ENCODE measurements at regions of chr5 and their contacts with region 1.

Region 1: DNA sequence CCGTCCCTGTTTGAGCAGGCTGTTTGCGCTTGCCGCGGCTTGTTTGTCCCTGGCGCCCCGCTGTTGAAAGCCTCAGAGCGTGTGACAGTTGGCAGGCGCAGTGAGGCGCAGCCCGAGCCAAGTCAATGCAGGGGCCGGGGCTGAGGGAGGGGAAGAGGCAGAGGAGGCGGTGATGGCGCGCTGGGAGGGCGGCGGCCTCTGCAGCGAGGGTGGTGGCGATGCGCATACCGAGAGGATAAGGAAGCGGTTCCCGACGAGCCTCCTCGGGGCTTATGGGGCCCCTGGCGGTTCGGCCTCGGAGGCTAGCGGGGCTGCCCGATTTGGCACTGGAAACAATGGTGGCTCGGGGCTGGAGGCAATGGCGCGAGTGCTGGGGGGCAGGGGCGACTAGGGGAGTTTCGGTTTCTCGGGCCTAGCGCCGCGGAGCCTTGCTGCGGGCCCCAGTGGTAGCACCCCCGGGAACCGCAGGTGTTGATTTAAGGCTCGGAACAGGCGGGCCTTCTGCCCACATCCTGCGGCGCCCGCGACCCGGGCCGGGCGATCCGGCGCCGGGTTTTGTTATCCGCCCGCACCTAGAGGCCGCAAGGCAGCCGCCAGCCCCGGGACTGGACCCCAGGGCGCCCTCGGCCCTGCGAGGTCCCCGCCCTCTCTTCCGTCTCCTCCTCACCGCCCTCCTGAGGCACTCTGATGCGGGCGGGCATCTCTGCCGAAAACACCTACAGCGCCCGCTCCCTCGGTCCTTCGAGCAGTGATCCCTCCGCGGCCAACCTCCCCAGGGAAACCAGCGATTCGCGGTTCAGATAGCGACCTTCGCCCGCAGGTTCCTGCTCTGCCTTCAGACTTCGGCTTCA is 947 bp upstream of the LNPEP start:
- DNase-seq: peak; percentile 98
- ATAC-seq: peak; percentile 68
- H3K4me3 ChIP-seq: peak overlapping the region; percentile 65 to 99 (median 90)
- H3K4me3 Mint-ChIP-seq: peak overlapping the region; percentile 95
- H3K27ac ChIP-seq: peak overlapping the region; percentile 88 to 93
- H3K27ac Mint-ChIP-seq: peak overlapping the region; percentile 99
- H3K4me1 ChIP-seq: peaks cover 49 to 58% of the 10 kb centered on the region in 2 donors
- H3K4me1 Mint-ChIP-seq: peaks cover 62% of the 10 kb centered on the region
- H3K27me3 ChIP-seq: no peaks in the 10 kb centered on the region
- H3K27me3 Mint-ChIP-seq: no peaks in the 10 kb centered on the region
- CTCF ChIP-seq: peak; percentile 13

Region 2: GRCh38 chr5:95808686-95809413 is 1126.1 kb before region 1 on chr5:
- CTCF ChIA-PET with region 1: no interaction called
- POLR2A ChIA-PET with region 1: no interaction called
- intact Hi-C with region 1: loop called (anchors 5 kb)
- DNase-seq: peak; percentile 95
- ATAC-seq: peak; percentile 100
- H3K4me3 ChIP-seq: peak overlapping the region in 3 of 5 experiments; percentile 27 to 39 (median 33)
- H3K4me3 Mint-ChIP-seq: peak overlapping the region; percentile 86
- H3K27ac ChIP-seq: peak overlapping the region; percentile 81 to 97
- H3K27ac Mint-ChIP-seq: peak overlapping the region; percentile 97
- H3K4me1 ChIP-seq: peaks cover 34 to 37% of the 10 kb centered on the region in 2 donors
- H3K4me1 Mint-ChIP-seq: peaks cover 58% of the 10 kb centered on the region
- H3K27me3 ChIP-seq: no peaks in the 10 kb centered on the region
- H3K27me3 Mint-ChIP-seq: no peaks in the 10 kb centered on the region
- CTCF ChIP-seq: no peak

Region 3: DNA sequence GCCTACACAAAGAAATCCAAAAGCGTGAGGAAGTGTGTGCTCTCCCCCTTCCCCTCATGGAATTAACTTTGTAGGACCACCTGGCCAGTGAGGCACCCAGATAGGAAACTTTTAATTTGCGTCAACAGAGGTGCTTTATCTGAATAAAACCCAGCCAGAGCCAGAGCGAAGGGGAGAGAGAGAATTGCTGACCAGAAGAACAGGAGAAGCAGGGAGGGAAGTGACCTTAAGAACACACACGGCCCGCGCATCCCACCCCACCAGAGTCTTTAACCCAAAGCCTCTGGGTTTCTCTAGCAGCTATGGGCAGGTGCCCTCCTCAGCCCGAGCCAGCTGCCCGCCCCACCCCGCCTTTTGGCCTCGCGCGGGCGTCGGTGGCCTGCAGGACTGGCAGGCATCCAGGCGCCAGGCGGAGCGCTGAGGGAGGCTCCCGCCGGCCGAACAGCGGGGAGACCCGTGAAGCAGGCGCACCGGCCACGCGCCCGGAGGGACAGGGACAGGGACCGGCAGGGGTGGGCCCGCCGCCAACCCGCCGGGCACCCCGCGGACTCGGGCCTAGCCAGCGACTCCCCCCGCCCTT is 127.8 kb before region 1 on chr5:
- CTCF ChIA-PET with region 1: no interaction called
- POLR2A ChIA-PET with region 1: interaction called, 18 read pairs
- intact Hi-C with region 1: loop called (anchors 1 kb)
- DNase-seq: no peak
- ATAC-seq: peak; percentile 19
- H3K4me3 ChIP-seq: peak overlapping the region; percentile 47 to 86 (median 73)
- H3K4me3 Mint-ChIP-seq: peak overlapping the region; percentile 90
- H3K27ac ChIP-seq: peak overlapping the region; percentile 86 to 90
- H3K27ac Mint-ChIP-seq: peak overlapping the region; percentile 99
- H3K4me1 ChIP-seq: peaks cover 25 to 32% of the 10 kb centered on the region in 2 donors
- H3K4me1 Mint-ChIP-seq: peaks cover 49% of the 10 kb centered on the region
- H3K27me3 ChIP-seq: no peaks in the 10 kb centered on the region
- H3K27me3 Mint-ChIP-seq: no peaks in the 10 kb centered on the region
- CTCF ChIP-seq: no peak

Region 4: GRCh38 chr5:96885518-96886338 is 49.2 kb before region 1 on chr5:
- CTCF ChIA-PET with region 1: interaction called, 3 read pairs
- POLR2A ChIA-PET with region 1: no interaction called
- intact Hi-C with region 1: loop called (anchors 1 kb)
- DNase-seq: peak; percentile 86
- ATAC-seq: peak; percentile 79
- H3K4me3 ChIP-seq: peak overlapping the region in 2 of 5 experiments; percentile 5 to 27
- H3K4me3 Mint-ChIP-seq: peak overlapping the region; percentile 75
- H3K27ac ChIP-seq: peak overlapping the region; percentile 76 to 91
- H3K27ac Mint-ChIP-seq: peak overlapping the region; percentile 92
- H3K4me1 ChIP-seq: peaks cover 51 to 57% of the 10 kb centered on the region in 2 donors
- H3K4me1 Mint-ChIP-seq: peaks cover 56% of the 10 kb centered on the region
- H3K27me3 ChIP-seq: no peaks in the 10 kb centered on the region
- H3K27me3 Mint-ChIP-seq: no peaks in the 10 kb centered on the region
- CTCF ChIP-seq: no peak

Region 5: DNA sequence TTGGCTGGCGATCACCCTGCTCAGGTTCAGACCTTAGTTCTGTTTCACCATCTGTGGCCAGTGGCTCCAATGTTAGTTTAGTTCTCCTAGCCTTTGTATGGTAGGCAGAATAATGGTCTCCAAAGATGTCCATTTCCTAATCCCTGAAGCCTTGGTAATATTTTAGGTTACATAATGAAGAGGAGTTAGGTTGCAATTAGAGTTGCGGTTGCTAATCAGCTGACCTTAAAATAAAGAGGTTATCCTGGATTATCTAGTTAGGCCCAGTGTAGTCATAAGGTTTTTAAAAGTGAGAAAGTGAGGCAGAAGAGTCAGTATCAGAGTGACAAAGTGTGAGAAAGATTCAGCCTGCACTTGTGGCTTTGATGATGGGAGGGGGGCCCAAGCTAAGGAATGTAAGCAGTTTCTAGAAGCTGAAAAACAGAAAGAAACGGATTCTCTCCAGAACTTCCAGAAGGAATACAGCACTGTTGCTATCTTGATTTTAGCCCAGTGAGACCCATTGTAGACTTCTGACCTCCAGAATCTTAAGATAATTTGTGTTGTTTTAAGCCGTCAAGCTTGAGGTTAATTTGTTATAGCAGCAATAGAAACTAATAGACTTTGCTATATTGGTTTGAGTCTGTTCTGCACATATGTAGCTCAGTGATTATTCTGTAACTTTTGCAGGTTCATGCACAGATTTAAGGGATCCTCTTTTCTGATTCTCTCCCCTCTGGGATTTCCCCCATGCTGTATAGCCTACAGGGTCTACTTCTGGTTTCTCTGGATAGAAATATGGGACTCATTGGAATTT is 22.5 kb after region 1 on chr5:
- CTCF ChIA-PET with region 1: interaction called, 6 read pairs
- POLR2A ChIA-PET with region 1: interaction called, 10 read pairs
- intact Hi-C with region 1: loop called (anchors 1 kb)
- DNase-seq: peak; percentile 56
- ATAC-seq: peak; percentile 17
- H3K4me3 ChIP-seq: peak overlapping the region in 2 of 5 experiments; percentile 30 to 54
- H3K4me3 Mint-ChIP-seq: peak overlapping the region; percentile 73
- H3K27ac ChIP-seq: peak overlapping the region; percentile 24 to 73
- H3K27ac Mint-ChIP-seq: peak overlapping the region; percentile 91
- H3K4me1 ChIP-seq: peaks cover 56 to 70% of the 10 kb centered on the region in 2 donors
- H3K4me1 Mint-ChIP-seq: peaks cover 77% of the 10 kb centered on the region
- H3K27me3 ChIP-seq: no peaks in the 10 kb centered on the region
- H3K27me3 Mint-ChIP-seq: no peaks in the 10 kb centered on the region
- CTCF ChIP-seq: no peak

Region 6: DNA sequence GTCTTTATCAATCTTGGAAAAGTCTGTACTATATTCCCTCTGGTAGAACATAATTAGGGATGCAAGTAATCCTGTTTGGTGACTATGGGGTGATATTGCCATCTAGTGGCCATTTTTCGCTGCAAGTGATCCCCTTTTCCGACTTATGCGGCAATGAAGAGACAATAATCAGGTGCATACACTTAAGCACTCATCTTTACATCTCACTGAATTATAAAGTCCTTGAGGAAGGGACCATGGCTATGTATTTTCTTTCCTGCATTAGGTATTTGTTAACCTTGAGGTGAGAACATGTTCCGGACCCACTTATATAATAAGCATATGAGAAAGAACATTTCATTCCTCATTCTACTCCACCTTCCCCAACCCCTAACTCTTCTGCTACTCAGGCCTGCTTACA is 227.1 kb after region 1 on chr5:
- CTCF ChIA-PET with region 1: interaction called, 3 read pairs
- POLR2A ChIA-PET with region 1: no interaction called
- intact Hi-C with region 1: loop called (anchors 5 kb)
- DNase-seq: peak; percentile 76
- ATAC-seq: peak; percentile 39
- H3K4me3 ChIP-seq: no peak overlapping the region
- H3K4me3 Mint-ChIP-seq: no peak overlapping the region
- H3K27ac ChIP-seq: no peak overlapping the region
- H3K27ac Mint-ChIP-seq: no peak overlapping the region
- H3K4me1 ChIP-seq: peaks cover under 1 to 2% of the 10 kb centered on the region in 2 donors
- H3K4me1 Mint-ChIP-seq: no peaks in the 10 kb centered on the region
- H3K27me3 ChIP-seq: no peaks in the 10 kb centered on the region
- H3K27me3 Mint-ChIP-seq: no peaks in the 10 kb centered on the region
- CTCF ChIP-seq: peak; percentile 96

Measured in B cell (primary cell).